ENCODE measurements at regions of chr17 and their contacts with region 1.

Region 1: GRCh38 chr17:71260366-71260940 is 860.4 kb upstream of the SOX9 start:
- DNase-seq: peak; percentile 53
- H3K4me3 ChIP-seq: no peak overlapping the region
- H3K27ac ChIP-seq: no peak overlapping the region
- H3K4me1 ChIP-seq: no peaks in the 10 kb centered on the region
- H3K27me3 ChIP-seq: no peaks in the 10 kb centered on the region
- CTCF ChIP-seq: no peak

Region 2: DNA sequence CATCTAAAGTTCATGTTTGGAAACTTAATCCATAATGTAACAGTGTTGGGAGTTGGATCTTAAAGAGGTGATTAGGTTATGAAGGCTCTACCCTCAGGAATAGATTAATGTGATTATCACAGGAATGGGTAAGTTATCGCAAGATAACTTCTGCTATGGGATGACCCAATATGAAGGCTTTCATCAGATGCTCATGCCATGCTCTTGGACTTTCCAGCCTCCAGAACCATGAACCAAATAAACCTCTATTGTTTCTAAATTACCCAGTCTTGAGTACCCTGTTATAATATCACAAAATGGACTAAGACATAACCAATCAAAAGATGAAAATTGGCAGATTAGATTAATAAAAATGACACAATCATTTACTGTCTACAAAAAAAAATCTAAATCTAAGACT is 46.5 kb before region 1 on chr17:
- CTCF ChIA-PET with region 1: no interaction called
- dilution Hi-C with region 1: no loop called
- in situ Hi-C with region 1: no loop called
- intact Hi-C with region 1: loop called (anchors 1 kb)
- DNase-seq: no peak
- H3K4me3 ChIP-seq: no peak overlapping the region
- H3K27ac ChIP-seq: no peak overlapping the region
- H3K4me1 ChIP-seq: peaks cover under 1% of the 10 kb centered on the region
- H3K27me3 ChIP-seq: no peaks in the 10 kb centered on the region
- CTCF ChIP-seq: no peak